Endothelial cell of umbilical vein (primary cell): ENCODE measurements at regions of chr16 and their contacts with region 1.

Region 1: GRCh38 chr16:57591086-57591869 is 37.2 kb upstream of the ADGRG1 start:
- DNase-seq: peak; percentile 74
- H3K4me3 ChIP-seq: no peak overlapping the region
- H3K27ac ChIP-seq: peak overlapping the region; percentile 32
- H3K4me1 ChIP-seq: peaks cover 12% of the 10 kb centered on the region
- H3K27me3 ChIP-seq: no peaks in the 10 kb centered on the region
- CTCF ChIP-seq: peak; percentile 92 to 95
- POLR2A ChIP-seq: no peak

Region 2: GRCh38 chr16:57628008-57628781 is 36.9 kb after region 1 on chr16 and contains the start of gene ADGRG1:
- CTCF ChIA-PET with region 1: interaction called, 28 read pairs
- POLR2A ChIA-PET with region 1: no interaction called
- dilution Hi-C with region 1: no loop called
- intact Hi-C with region 1: loop called (anchors 1 kb)
- DNase-seq: peak; percentile 95
- H3K4me3 ChIP-seq: peak within 1 kb of the TSS; percentile 7 to 48 (median 45)
- H3K27ac ChIP-seq: peak within 1 kb of the TSS; percentile 88
- H3K4me1 ChIP-seq: peaks cover 43% of the 10 kb centered on the region
- H3K27me3 ChIP-seq: no peaks in the 10 kb centered on the region
- CTCF ChIP-seq: peak in 1 of 2 donors; percentile 13
- POLR2A ChIP-seq: no peak
- total RNA-seq, gene ADGRG1: 92.5 and 116 TPM in 2 replicates

Region 3: DNA sequence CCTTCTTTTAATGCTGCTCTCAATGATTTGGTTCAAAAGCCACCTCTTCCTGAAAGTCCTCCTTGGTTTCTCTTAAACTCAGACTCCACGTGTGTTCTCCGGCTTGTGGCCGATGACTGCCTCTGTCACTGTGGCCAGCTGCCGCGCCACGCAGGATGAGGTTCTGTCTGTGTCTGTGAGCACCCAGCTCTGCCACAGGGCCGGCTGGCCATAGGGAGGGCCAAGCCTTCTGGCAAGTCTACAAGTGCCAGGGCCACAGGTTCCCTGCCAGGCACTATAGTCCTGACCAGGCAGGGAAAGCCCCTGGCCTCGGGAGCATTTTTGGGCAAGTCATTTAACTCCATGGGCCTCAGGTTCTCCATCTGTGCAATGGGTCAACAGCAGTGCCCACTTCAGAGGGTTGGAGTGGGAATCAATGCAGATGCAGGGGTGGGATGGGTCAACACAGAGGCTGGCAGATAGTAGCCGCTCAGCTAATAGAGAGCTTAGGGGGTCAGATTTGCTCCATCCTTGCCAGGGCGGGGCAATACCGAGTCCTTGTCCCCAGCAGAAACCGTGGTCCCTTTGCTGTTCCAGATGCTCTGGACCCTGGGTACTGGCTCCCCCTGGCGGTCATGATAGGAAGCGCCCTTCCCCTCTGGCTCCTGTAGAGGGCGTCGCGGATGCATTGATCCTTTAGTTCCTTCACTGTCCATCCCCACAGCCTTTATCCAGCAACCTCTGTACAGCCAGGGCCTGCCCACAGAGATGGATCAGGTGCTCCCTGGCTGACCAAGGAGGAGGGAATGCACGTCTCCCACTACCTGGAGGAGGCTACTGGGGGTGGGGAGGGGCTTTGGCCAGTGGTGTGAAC is 57.5 kb after region 1 on chr16:
- CTCF ChIA-PET with region 1: interaction called, 117 read pairs
- POLR2A ChIA-PET with region 1: interaction called, 4 read pairs
- dilution Hi-C with region 1: no loop called
- intact Hi-C with region 1: loop called (anchors 1 kb)
- DNase-seq: peak; percentile 84
- H3K4me3 ChIP-seq: no peak overlapping the region
- H3K27ac ChIP-seq: peak overlapping the region; percentile 14
- H3K4me1 ChIP-seq: peaks cover 37% of the 10 kb centered on the region
- H3K27me3 ChIP-seq: no peaks in the 10 kb centered on the region
- CTCF ChIP-seq: peak; percentile 100
- POLR2A ChIP-seq: no peak

Region 4: DNA sequence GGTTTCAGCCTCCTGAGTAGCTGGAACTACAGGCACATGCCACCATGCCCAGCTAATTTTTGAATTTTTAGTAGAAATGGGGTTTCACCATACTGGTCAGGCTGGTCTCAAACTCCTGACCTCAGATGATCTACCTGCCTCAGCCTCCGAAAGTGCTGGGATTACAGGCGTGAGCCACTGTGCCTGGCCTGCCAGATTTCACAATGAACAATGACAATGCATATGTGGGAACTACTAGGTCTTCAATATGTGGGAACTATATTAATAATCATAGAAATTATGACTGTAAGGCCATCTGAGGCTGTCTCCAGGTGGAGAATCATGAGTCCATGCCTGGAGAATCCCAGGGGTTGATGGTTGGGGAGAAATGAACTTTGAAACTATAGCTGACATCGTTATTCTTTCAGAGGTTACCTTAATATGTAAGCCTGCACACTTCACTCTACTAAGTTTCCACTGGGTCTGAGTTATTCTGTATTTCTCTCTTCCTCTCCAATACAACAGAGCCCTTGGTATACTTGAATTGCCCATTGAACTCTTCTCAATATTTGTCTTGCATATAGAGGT is 96.2 kb after region 1 on chr16:
- CTCF ChIA-PET with region 1: interaction called, 15 read pairs
- POLR2A ChIA-PET with region 1: no interaction called
- dilution Hi-C with region 1: no loop called
- intact Hi-C with region 1: no loop called
- DNase-seq: no peak
- H3K4me3 ChIP-seq: no peak overlapping the region
- H3K27ac ChIP-seq: no peak overlapping the region
- H3K4me1 ChIP-seq: no peaks in the 10 kb centered on the region
- H3K27me3 ChIP-seq: peaks cover 4 to 7% of the 10 kb centered on the region in 2 experiments
- CTCF ChIP-seq: no peak
- POLR2A ChIP-seq: no peak

Region 5: GRCh38 chr16:57725554-57726330 is 134.5 kb after region 1 on chr16:
- CTCF ChIA-PET with region 1: interaction called, 14 read pairs
- POLR2A ChIA-PET with region 1: no interaction called
- dilution Hi-C with region 1: no loop called
- intact Hi-C with region 1: loop called (anchors 1 kb)
- DNase-seq: no peak
- H3K4me3 ChIP-seq: no peak overlapping the region
- H3K27ac ChIP-seq: no peak overlapping the region
- H3K4me1 ChIP-seq: no peaks in the 10 kb centered on the region
- H3K27me3 ChIP-seq: no peaks in the 10 kb centered on the region
- CTCF ChIP-seq: no peak
- POLR2A ChIP-seq: no peak

Region 6: DNA sequence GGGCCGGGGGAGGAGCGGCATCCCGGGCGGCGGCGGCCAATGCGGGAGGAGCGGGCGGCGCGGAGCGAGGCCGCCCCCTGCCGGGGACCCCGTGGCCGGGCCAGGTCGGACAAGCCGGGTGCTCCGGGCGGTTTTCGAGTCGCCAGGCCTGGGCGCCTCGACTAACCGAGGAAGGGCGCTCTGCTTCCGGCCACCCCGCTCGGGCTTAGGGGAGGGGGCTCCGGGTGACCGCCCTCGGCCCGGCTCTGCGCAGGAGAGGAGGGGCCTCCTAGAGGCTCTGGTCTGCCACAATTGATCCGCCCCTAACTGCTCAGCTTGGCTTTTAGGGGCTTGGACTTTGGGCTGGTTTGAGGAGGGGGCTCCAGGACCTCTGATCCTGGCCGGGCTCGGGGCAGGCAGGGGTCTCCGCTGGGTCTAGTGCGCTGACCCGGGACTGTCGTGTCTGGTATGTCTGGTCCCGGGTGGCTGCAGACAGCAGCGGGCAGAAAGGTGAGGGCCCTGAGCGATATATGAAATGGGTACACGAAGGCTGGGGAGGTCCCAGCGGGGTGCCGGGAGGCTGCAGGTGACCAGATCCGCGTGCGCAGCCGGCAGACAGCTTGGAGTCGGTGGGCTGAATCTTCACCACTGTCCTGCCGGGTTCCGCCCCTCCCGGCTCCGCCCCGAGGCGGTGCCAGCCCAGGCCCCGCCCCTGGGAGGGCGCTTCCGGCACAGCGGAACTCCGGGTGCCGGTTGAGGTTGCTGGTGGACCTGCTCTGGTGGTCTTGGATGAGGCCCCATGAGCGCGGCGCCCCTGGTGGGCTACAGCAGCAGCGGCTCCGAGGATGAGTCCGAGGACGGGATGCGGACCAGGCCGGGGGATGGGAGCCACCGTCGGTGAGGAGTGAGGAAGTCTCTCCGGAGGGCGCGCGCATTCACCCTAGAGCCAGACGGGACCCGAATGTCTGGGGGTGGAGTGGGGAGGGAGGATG is 409.7 kb after region 1 on chr16 and contains the start of gene USB1:
- CTCF ChIA-PET with region 1: interaction called, 4 read pairs
- POLR2A ChIA-PET with region 1: no interaction called
- dilution Hi-C with region 1: no loop called
- intact Hi-C with region 1: loop called (anchors 2 kb)
- DNase-seq: peak; percentile 74
- H3K4me3 ChIP-seq: peak within 1 kb of the TSS; percentile 68 to 90 (median 85)
- H3K27ac ChIP-seq: peak within 1 kb of the TSS; percentile 19
- H3K4me1 ChIP-seq: peaks cover 17% of the 10 kb centered on the region
- H3K27me3 ChIP-seq: no peaks in the 10 kb centered on the region
- CTCF ChIP-seq: peak; percentile 63 to 73
- POLR2A ChIP-seq: peak; percentile 92
- total RNA-seq, gene USB1: 64.6 and 66.6 TPM in 2 replicates